ENCODE measurements at regions of chr14 and their contacts with region 1.

Region 1: GRCh38 chr14:22852940-22853767 is 16.8 kb downstream of the MMP14 start:
- DNase-seq: peak in 1 of 2 experiments; percentile 100
- H3K4me3 ChIP-seq: peak overlapping the region in 3 of 4 experiments; percentile 32 to 58 (median 42); a peak in 7 of 8 replicates
- H3K27ac ChIP-seq: no peak overlapping the region
- H3K4me1 ChIP-seq: peaks cover 0 to 17% (median 7%) of the 10 kb centered on the region in 4 experiments; a peak in 6 of 7 replicates
- H3K27me3 ChIP-seq: no peaks in the 10 kb centered on the region
- CTCF ChIP-seq: peak; percentile 95 to 97 (median 96)
- EP300 ChIP-seq: no peak
- POLR2A ChIP-seq: no peak; a peak in 1 of 3 replicates
- RAD21 ChIP-seq: peak; percentile 94 to 96

Region 2: GRCh38 chr14:22556990-22557623 is 296.0 kb before region 1 on chr14:
- CTCF ChIA-PET with region 1: interaction called, 10 read pairs
- POLR2A ChIA-PET with region 1: no interaction called
- DNase-seq: peak; percentile 51 to 97
- H3K4me3 ChIP-seq: peak overlapping the region in 2 of 4 experiments; percentile 30 to 51; a peak in 3 of 8 replicates
- H3K27ac ChIP-seq: peak overlapping the region; percentile 37; the same call in 1 of the 2 replicates
- H3K4me1 ChIP-seq: peaks cover 2 to 10% (median 6%) of the 10 kb centered on the region in 4 experiments; a peak in 6 of 7 replicates
- H3K27me3 ChIP-seq: no peaks in the 10 kb centered on the region
- CTCF ChIP-seq: peak; percentile 72 to 80 (median 78)
- EP300 ChIP-seq: no peak
- POLR2A ChIP-seq: no peak
- RAD21 ChIP-seq: peak; percentile 78 to 80

Region 3: GRCh38 chr14:22773162-22774010 is 79.8 kb before region 1 on chr14:
- CTCF ChIA-PET with region 1: interaction called, 34 read pairs
- POLR2A ChIA-PET with region 1: interaction called, 3 read pairs
- DNase-seq: no peak
- H3K4me3 ChIP-seq: no peak overlapping the region
- H3K27ac ChIP-seq: no peak overlapping the region
- H3K4me1 ChIP-seq: no peaks in the 10 kb centered on the region
- H3K27me3 ChIP-seq: no peaks in the 10 kb centered on the region
- CTCF ChIP-seq: no peak
- EP300 ChIP-seq: no peak
- POLR2A ChIP-seq: no peak
- RAD21 ChIP-seq: no peak

Region 4: GRCh38 chr14:22822571-22823098 is 30.5 kb before region 1 on chr14:
- CTCF ChIA-PET with region 1: interaction called, 1,562 read pairs
- POLR2A ChIA-PET with region 1: interaction called, 203 read pairs
- DNase-seq: peak; percentile 92 to 95
- H3K4me3 ChIP-seq: peak overlapping the region; percentile 57 to 94 (median 76)
- H3K27ac ChIP-seq: peak overlapping the region; percentile 95
- H3K4me1 ChIP-seq: peaks cover 16 to 26% (median 20%) of the 10 kb centered on the region in 4 experiments
- H3K27me3 ChIP-seq: no peaks in the 10 kb centered on the region
- CTCF ChIP-seq: peak; percentile 76 to 97 (median 79)
- EP300 ChIP-seq: peak in 1 of 2 experiments; percentile 87; a peak in 1 of 3 replicates
- POLR2A ChIP-seq: peak in 1 of 2 experiments; percentile 53; a peak in 2 of 3 replicates
- RAD21 ChIP-seq: peak; percentile 94 to 97

Region 5: GRCh38 chr14:22865424-22866405 is 12.6 kb after region 1 on chr14:
- CTCF ChIA-PET with region 1: interaction called, 88 read pairs
- POLR2A ChIA-PET with region 1: interaction called, 4 read pairs
- DNase-seq: peak in 1 of 2 experiments; percentile 87
- H3K4me3 ChIP-seq: no peak overlapping the region
- H3K27ac ChIP-seq: no peak overlapping the region
- H3K4me1 ChIP-seq: peaks cover 0 to 6% (median 2%) of the 10 kb centered on the region in 4 experiments; a peak in 3 of 7 replicates
- H3K27me3 ChIP-seq: no peaks in the 10 kb centered on the region
- CTCF ChIP-seq: peak; percentile 76 to 85 (median 77)
- EP300 ChIP-seq: no peak
- POLR2A ChIP-seq: no peak
- RAD21 ChIP-seq: peak; percentile 45 to 62

Region 6: DNA sequence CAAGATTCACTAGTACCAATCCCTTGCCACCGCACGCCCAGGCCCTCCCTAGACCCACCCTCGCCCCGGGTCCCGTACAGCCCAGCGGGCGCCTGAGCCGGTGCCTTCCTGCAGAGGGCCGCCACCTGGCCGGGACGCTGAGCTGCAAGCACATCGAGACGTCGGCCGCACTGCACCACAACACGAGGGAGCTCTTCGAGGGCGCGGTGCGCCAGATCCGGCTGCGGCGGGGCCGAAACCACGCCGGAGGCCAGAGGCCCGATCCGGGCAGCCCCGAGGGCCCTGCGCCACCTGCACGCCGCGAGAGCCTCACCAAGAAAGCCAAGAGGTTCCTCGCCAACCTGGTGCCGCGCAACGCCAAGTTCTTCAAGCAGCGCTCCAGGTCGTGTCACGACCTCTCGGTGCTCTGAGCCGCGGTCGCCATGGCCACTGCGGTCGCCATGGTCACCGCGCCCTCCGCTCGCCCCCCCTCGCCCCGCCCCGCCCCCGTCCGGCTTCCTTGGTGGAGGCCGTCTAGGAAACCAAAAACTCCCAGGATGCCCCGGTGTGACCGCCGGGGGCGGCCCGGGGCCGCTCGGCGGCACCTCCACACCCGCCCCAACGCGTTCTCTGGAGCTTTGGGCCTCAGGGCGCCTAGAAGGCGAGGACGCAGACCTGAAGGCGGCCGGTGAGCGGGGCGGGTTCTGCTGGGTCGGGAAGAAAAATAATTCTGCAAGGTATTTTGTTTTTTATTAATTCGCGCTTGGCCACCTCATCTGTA is 33.5 kb after region 1 on chr14:
- CTCF ChIA-PET with region 1: interaction called, 32 read pairs
- POLR2A ChIA-PET with region 1: interaction called, 5 read pairs
- DNase-seq: peak in 1 of 2 experiments; percentile 87
- H3K4me3 ChIP-seq: peak overlapping the region; percentile 57 to 83 (median 65)
- H3K27ac ChIP-seq: peak overlapping the region; percentile 25
- H3K4me1 ChIP-seq: peaks cover 7 to 21% (median 12%) of the 10 kb centered on the region in 4 experiments
- H3K27me3 ChIP-seq: peaks cover 0 to 17% (median 11%) of the 10 kb centered on the region in 4 experiments; a peak in 6 of 7 replicates
- CTCF ChIP-seq: peak; percentile 17 to 35 (median 21); a peak in 3 of 4 replicates
- EP300 ChIP-seq: no peak
- POLR2A ChIP-seq: peak in 1 of 2 experiments; percentile 75; a peak in 2 of 3 replicates
- RAD21 ChIP-seq: peak in 1 of 2 experiments; percentile 6; a peak in 2 of 4 replicates

Region 7: DNA sequence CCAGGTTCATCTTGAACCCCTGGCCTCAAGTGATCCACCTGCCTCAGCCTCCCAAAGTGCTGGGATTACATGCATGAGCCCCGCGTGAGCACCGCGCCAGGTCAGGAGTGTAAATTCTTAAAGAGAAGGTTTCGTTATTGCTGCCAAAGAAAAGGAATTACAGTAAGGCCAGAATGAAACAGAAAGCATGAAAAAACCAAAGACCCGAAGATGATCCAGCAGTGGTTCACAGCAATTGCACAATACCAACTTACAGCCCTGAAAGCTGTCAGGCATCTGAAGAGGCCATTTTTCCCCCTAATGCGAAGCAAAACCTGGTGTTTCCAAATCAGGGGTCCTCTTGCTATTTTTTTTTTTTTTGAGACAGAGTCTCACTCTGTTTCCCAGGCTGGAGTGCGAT is 55.4 kb after region 1 on chr14:
- CTCF ChIA-PET with region 1: no interaction called
- POLR2A ChIA-PET with region 1: no interaction called
- DNase-seq: no peak
- H3K4me3 ChIP-seq: no peak overlapping the region
- H3K27ac ChIP-seq: no peak overlapping the region
- H3K4me1 ChIP-seq: no peaks in the 10 kb centered on the region
- H3K27me3 ChIP-seq: no peaks in the 10 kb centered on the region
- CTCF ChIP-seq: no peak
- EP300 ChIP-seq: no peak
- POLR2A ChIP-seq: no peak
- RAD21 ChIP-seq: no peak

Region 8: GRCh38 chr14:22996768-22997654 is 143.9 kb after region 1 on chr14:
- CTCF ChIA-PET with region 1: no interaction called
- POLR2A ChIA-PET with region 1: no interaction called
- DNase-seq: no peak
- H3K4me3 ChIP-seq: no peak overlapping the region
- H3K27ac ChIP-seq: no peak overlapping the region
- H3K4me1 ChIP-seq: peaks cover 0 to 5% (median 2%) of the 10 kb centered on the region in 4 experiments; a peak in 2 of 7 replicates
- H3K27me3 ChIP-seq: no peaks in the 10 kb centered on the region
- CTCF ChIP-seq: no peak
- EP300 ChIP-seq: no peak
- POLR2A ChIP-seq: no peak
- RAD21 ChIP-seq: no peak

Measured in H1 (cell line).